GM12878 (cell line): ENCODE measurements at regions of chr5 and their contacts with region 1.

Region 1: DNA sequence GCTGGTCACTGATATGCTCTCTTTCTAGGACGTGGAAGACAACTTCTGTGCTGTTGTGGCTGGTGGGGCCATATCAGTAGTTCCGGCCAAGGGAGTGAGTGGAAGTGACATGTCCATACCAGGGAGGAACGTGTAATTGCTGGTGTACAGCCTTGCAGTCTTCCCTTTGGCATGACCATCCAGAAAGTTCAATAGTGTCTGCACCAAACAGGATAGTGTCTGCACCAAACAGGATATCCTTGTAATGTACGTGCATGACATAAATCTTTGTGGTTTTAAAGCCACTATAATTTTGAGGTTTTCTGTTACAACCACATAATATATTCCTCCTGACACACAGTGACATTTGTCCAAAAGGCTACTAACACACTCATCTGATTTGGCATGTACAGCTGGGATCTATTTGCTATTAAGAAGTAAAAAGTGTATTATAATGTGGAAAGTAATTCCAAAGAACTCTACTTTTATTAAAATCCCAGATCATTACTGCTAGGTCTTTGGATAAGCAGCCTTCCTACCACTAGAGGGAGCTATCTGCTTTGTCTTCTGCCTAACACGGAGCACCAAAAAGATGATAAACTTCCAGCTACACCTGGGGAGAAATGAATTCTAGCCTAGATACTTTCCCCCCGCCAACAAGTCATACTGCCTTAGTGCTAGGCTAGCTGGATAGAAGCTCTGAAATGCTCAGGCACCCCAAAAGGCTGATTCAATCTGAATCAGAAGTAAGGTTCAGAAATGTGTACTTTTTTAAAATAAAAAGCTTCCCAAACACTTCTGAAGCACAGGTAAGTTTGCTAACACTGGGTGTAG is 52.7 kb downstream of the RNF145 start:
- DNase-seq: peak; percentile 30
- ATAC-seq: peak; percentile 96
- H3K4me3 ChIP-seq: no peak overlapping the region
- H3K27ac ChIP-seq: no peak overlapping the region
- H3K4me1 ChIP-seq: peaks cover 7% of the 10 kb centered on the region
- H3K27me3 ChIP-seq: no peaks in the 10 kb centered on the region
- CTCF ChIP-seq: peak; percentile 79 to 83 (median 82)
- EP300 ChIP-seq: no peak
- POLR2A ChIP-seq: no peak
- RAD21 ChIP-seq: peak; percentile 93

Region 2: DNA sequence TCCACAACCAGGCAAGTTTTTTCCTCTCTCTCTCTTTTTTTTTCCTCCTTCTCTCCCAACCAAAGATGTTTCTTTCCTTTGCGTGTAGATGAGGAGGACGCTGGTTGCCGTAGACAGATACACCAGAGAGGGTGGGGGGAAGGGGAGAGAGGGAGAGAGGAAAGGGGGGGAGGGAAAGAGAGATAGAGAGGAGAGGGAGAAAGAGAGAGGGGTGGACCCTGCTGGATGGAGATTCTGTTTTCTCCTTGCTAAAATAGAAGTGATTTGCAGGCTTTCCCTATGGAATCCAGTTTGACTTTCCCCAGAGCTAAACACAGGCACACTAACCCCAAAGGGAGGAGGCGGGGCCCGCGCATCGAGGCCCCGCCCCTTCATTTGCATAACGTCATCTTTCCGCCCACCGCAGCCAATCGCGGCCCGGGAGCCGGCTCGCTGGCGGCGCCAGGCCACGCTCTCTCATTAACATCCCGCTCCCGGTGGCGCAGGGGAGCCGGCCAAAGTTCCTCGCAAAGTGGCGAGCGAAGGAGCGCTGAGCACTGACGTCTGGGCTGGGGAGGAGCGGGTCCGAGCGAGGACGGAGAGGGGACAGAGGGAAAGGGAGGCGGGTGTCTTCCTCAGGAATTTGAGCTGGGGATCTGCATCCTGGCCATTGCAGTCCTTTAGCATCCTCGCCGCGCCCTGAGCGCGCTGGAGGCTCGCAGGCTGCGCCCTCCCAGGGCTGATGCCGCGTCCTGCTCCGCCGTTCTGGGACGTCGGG is 56.4 kb before region 1 on chr5:
- CTCF ChIA-PET with region 1: no interaction called
- POLR2A ChIA-PET with region 1: no interaction called
- RAD21 ChIA-PET with region 1: no interaction called
- SMC1A ChIA-PET with region 1: no interaction called
- in situ Hi-C with region 1: no loop called
- intact Hi-C with region 1: no loop called
- DNase-seq: peak; percentile 81
- ATAC-seq: peak; percentile 58
- H3K4me3 ChIP-seq: peak overlapping the region; percentile 67
- H3K27ac ChIP-seq: peak overlapping the region; percentile 67
- H3K4me1 ChIP-seq: peaks cover 5% of the 10 kb centered on the region
- H3K27me3 ChIP-seq: no peaks in the 10 kb centered on the region
- CTCF ChIP-seq: no peak
- EP300 ChIP-seq: peak in 1 of 2 experiments; percentile 1; a peak in 2 of 4 replicates
- POLR2A ChIP-seq: peak; percentile 93
- RAD21 ChIP-seq: no peak

Region 3: GRCh38 chr5:159198063-159199036 is 41.7 kb after region 1 on chr5:
- CTCF ChIA-PET with region 1: interaction called, 22 read pairs
- POLR2A ChIA-PET with region 1: no interaction called
- RAD21 ChIA-PET with region 1: interaction called, 7 read pairs
- SMC1A ChIA-PET with region 1: interaction called, 23 read pairs
- in situ Hi-C with region 1: no loop called
- intact Hi-C with region 1: no loop called
- DNase-seq: peak; percentile 56
- ATAC-seq: peak; percentile 92
- H3K4me3 ChIP-seq: peak overlapping the region; percentile 31; the same call in 1 of the 2 replicates
- H3K27ac ChIP-seq: peak overlapping the region; percentile 63
- H3K4me1 ChIP-seq: peaks cover 24% of the 10 kb centered on the region
- H3K27me3 ChIP-seq: no peaks in the 10 kb centered on the region
- CTCF ChIP-seq: no peak
- EP300 ChIP-seq: no peak
- POLR2A ChIP-seq: no peak
- RAD21 ChIP-seq: no peak

Region 4: GRCh38 chr5:159274676-159275075 is 118.0 kb after region 1 on chr5:
- CTCF ChIA-PET with region 1: interaction called, 43 read pairs
- POLR2A ChIA-PET with region 1: no interaction called
- RAD21 ChIA-PET with region 1: interaction called, 18 read pairs
- SMC1A ChIA-PET with region 1: interaction called, 17 read pairs
- in situ Hi-C with region 1: no loop called
- intact Hi-C with region 1: no loop called
- DNase-seq: no peak
- ATAC-seq: no peak
- H3K4me3 ChIP-seq: no peak overlapping the region
- H3K27ac ChIP-seq: no peak overlapping the region
- H3K4me1 ChIP-seq: no peaks in the 10 kb centered on the region
- H3K27me3 ChIP-seq: no peaks in the 10 kb centered on the region
- CTCF ChIP-seq: no peak
- EP300 ChIP-seq: no peak
- POLR2A ChIP-seq: no peak
- RAD21 ChIP-seq: no peak

Region 5: DNA sequence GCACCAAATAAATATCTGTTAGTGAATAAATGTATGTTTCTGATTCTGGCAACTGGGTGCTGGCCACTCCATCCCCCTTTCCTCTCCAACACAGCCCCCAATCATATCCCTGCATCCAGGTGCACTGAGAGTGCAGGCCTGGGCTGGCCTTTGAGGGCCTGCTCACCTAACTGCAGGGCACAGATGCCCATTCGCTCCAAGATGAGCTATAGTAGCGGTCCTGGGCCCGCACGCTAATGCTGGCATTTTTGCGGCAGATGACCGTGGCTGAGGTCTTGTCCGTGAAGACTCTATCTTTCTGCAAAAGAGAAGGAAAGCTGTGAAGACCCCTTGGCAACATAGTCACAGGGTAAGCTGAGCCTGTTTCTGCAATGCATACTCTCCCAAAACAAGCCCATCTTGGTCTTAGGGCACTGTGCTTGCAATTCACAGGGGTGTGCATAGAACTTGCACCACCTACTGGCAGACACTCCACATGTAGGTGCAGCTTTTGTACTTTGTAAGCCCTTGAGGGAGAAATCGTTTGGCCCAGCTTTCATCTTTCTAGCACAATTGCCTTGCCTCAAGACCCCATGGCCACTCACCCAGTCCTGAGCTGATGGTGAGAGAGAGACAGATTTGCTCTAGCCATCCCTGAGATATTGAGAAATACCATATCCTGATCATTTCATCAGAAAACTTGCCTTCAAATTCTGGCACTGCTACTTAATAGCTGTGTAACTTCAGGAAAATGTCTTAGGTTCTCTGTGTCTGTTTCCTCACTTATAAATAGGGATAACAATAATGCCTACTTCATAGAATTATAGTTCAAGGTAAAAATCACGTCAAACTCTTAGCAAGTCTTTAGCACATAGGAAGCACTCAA is 160.1 kb after region 1 on chr5:
- CTCF ChIA-PET with region 1: interaction called, 216 read pairs
- POLR2A ChIA-PET with region 1: interaction called, 3 read pairs
- RAD21 ChIA-PET with region 1: interaction called, 112 read pairs
- SMC1A ChIA-PET with region 1: interaction called, 131 read pairs
- in situ Hi-C with region 1: loop called (anchors 5 kb)
- intact Hi-C with region 1: loop called (anchors 1 kb)
- DNase-seq: no peak
- ATAC-seq: peak; percentile 98
- H3K4me3 ChIP-seq: no peak overlapping the region
- H3K27ac ChIP-seq: no peak overlapping the region
- H3K4me1 ChIP-seq: no peaks in the 10 kb centered on the region
- H3K27me3 ChIP-seq: no peaks in the 10 kb centered on the region
- CTCF ChIP-seq: peak; percentile 73 to 77 (median 76)
- EP300 ChIP-seq: no peak
- POLR2A ChIP-seq: no peak
- RAD21 ChIP-seq: peak; percentile 75

Region 6: DNA sequence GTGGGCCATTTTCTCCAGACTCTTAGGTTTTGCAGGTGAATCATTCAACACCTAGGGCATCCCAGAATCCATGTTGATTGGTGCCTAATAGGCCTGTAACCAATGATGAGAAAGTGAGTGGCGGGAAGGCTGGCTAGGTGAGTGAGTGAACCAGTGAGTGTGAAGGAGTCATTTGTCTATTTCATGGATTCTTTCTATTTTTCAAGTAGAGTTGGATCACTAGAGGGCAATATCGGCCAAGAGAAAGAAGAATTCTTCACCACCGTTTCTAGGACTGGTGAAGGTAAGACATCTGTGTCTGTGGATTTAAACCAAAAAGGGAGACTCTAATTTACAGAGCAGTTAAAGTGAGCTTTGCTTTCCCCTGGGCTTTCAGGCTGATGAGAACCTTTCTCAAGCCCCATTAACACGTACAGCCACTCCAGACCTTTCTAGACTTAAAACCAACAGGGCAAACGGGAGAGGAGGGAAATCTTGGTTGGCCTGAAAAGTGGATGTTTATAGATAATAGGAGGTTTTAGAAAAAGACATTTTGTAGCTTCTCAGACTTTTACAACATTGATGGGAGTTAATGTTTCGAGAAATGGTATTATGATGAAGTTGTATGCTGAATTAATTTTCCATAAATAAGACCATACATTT is 287.9 kb after region 1 on chr5:
- CTCF ChIA-PET with region 1: interaction called, 17 read pairs
- POLR2A ChIA-PET with region 1: no interaction called
- RAD21 ChIA-PET with region 1: interaction called, 9 read pairs
- SMC1A ChIA-PET with region 1: interaction called, 5 read pairs
- in situ Hi-C with region 1: no loop called
- intact Hi-C with region 1: no loop called
- DNase-seq: no peak
- ATAC-seq: peak; percentile 56
- H3K4me3 ChIP-seq: no peak overlapping the region
- H3K27ac ChIP-seq: no peak overlapping the region
- H3K4me1 ChIP-seq: no peaks in the 10 kb centered on the region
- H3K27me3 ChIP-seq: no peaks in the 10 kb centered on the region
- CTCF ChIP-seq: peak; percentile 3 to 65 (median 27); a peak in 3 of 6 replicates
- EP300 ChIP-seq: no peak
- POLR2A ChIP-seq: no peak
- RAD21 ChIP-seq: peak; percentile 77